Calu3 (cell line): ENCODE measurements at regions of chr1 and their contacts with region 1.

Region 1: DNA sequence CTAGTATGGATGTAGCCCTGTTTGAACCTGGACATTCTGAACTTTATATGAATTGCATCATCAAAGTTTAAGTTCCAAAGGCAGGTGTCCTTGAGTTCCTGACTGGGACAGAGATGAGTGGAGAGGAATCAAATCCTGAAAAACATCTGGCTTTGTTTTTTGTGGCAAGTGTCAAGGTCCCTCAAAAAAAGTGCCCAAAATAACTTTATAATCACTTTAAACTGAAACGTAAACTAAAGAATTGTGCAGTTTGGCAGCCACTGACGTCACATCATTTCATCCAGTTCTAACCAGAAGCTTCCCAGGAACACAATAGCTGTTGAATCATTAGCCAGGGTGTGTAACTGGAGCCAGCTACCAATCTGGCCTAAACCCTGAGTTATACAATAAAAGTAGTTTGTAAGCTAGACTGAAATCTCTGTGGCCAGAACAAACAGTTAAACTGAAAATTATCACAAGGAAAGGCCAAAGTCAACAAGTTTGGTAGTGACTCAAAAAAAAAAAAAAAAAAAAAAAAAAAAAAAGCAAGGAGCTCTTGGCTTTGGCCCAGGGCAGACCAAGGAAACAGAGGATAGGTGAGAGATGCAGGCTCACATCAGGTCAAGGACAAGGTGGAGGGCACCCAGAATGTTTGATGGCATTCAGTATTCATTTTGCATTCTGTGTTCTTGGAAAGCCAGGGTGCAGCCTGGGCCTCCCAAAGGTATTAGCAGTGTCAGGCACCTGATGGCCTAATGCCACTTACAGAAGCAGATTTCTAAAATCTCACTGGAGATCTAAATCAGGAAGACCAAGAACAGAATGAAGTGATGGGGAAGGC is 74.3 kb downstream of the TNFSF18 start:
- DNase-seq: peak; percentile 71
- H3K4me3 Mint-ChIP-seq: no peak overlapping the region
- H3K27ac Mint-ChIP-seq: peak overlapping the region; percentile 72
- H3K4me1 Mint-ChIP-seq: peaks cover 53% of the 10 kb centered on the region
- H3K27me3 Mint-ChIP-seq: no peaks in the 10 kb centered on the region
- CTCF ChIP-seq: no peak

Region 2: DNA sequence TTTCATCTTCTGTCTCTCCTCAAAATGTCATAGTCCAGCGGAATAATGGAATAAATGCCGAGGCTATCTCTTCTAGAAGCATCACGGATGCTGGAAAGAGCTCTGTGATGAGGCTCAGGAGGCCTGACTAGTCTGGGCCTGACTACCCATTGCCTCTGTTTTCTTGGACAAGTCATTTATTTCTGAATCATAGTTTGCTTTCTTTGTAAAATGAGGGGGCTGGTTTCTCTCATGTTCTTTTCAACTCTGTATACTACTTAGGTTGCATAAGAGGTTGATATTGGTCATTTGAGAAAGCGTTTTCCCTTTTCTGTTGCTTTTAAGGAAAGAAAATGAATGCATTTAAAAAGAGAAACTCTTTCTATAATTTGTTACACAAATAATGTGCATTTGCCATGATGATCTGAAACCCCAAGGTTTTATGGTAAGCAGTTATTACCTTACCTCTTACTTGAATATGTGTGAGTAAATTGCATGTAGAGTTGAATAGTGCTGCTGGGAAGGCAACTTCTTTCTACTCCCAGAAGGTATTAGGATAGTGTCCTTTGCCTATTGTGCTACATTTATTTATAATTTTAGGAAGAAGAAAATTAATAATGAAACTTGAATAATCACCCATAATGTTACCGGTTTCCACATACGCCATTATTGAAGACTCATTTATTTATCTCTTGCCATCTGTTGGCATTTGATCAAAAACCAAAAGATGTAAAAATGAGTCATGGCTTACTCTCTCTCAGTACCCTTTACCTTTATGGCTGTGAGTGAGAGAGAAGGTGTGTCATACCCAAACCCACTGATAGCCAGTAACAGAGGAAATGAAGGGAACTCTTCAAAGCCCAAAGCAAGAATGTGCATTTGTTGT is 138.4 kb before region 1 on chr1:
- CTCF ChIA-PET with region 1: no interaction called
- intact Hi-C with region 1: no loop called
- DNase-seq: no peak
- H3K4me3 Mint-ChIP-seq: no peak overlapping the region
- H3K27ac Mint-ChIP-seq: no peak overlapping the region
- H3K4me1 Mint-ChIP-seq: no peaks in the 10 kb centered on the region
- H3K27me3 Mint-ChIP-seq: no peaks in the 10 kb centered on the region
- CTCF ChIP-seq: no peak

Region 3: GRCh38 chr1:172906778-172907592 is 69.4 kb before region 1 on chr1:
- CTCF ChIA-PET with region 1: no interaction called
- intact Hi-C with region 1: loop called (anchors 5 kb)
- DNase-seq: peak; percentile 45
- H3K4me3 Mint-ChIP-seq: peak overlapping the region; percentile 24
- H3K27ac Mint-ChIP-seq: peak overlapping the region; percentile 93
- H3K4me1 Mint-ChIP-seq: peaks cover 65% of the 10 kb centered on the region
- H3K27me3 Mint-ChIP-seq: no peaks in the 10 kb centered on the region
- CTCF ChIP-seq: no peak

Region 4: DNA sequence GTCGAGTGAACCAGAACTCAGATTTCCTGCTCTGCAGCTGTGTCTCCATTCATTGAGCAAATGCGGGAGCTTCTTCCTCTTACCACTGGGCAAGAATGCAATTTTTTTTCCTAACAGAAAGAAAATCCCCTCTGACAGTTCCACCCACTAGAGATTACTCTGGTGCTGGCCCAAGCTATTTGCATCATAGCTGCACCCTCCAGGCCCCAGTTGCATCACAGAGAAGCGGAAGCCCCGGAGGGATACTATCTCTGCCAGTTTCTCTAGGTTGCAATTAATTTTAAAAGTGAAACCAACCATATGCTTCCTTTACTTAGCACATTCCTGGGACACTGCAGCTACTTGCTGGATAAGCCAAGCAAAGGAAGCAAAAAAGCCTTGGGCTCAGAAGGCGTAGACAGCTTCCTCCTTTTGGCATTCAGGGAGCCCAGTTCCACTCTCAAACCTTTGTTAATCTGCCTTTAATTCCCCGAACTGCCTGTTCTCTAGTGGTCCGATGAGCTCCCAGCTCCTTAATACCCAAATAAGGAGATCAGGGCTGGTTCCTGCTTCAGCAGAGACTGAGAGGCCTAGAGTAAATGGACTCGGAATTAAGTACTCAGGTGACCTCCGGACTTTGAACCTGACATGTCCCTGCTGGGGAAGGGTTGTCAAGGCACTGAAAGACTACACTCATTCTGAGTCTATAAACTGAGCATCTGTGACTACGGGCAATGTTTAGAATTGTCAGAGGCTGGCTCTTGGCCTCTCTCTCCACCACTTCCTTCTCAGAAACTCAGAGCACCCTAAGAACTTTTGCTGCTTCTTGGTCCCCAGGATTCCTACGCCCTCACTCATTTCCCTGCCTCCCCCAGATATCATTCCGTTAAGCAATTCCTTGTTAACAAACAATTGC is 146.8 kb after region 1 on chr1:
- CTCF ChIA-PET with region 1: interaction called, 3 read pairs
- intact Hi-C with region 1: loop called (anchors 2 kb)
- DNase-seq: peak; percentile 55
- H3K4me3 Mint-ChIP-seq: peak overlapping the region; percentile 65
- H3K27ac Mint-ChIP-seq: peak overlapping the region; percentile 88
- H3K4me1 Mint-ChIP-seq: peaks cover 50% of the 10 kb centered on the region
- H3K27me3 Mint-ChIP-seq: no peaks in the 10 kb centered on the region
- CTCF ChIP-seq: no peak

Region 5: GRCh38 chr1:173202430-173203145 is 226.2 kb after region 1 on chr1:
- CTCF ChIA-PET with region 1: interaction called, 10 read pairs
- intact Hi-C with region 1: loop called (anchors 2 kb)
- DNase-seq: peak; percentile 61
- H3K4me3 Mint-ChIP-seq: no peak overlapping the region
- H3K27ac Mint-ChIP-seq: no peak overlapping the region
- H3K4me1 Mint-ChIP-seq: peaks cover 19% of the 10 kb centered on the region
- H3K27me3 Mint-ChIP-seq: no peaks in the 10 kb centered on the region
- CTCF ChIP-seq: peak; percentile 72

Region 6: DNA sequence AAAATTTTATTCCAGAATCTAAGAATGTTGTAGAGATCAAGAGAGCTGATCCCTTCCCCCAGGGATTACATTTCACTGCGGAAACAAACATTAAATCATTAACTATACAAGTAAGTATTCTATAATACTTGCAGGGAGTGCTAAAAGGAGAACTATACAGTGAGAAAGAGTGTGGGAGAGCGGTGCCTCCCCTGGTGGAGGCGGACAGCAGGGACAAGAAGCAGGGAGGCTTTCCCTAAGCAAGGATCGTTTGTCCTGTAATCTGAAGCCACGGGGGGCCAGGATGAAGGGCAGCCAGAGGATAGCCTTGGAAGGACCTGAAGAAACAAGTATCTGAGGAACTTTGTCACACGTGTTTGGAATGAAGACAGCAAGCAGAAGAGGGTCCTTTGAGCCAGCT is 586.4 kb after region 1 on chr1:
- CTCF ChIA-PET with region 1: no interaction called
- intact Hi-C with region 1: no loop called
- DNase-seq: peak; percentile 29
- H3K4me3 Mint-ChIP-seq: no peak overlapping the region
- H3K27ac Mint-ChIP-seq: no peak overlapping the region
- H3K4me1 Mint-ChIP-seq: no peaks in the 10 kb centered on the region
- H3K27me3 Mint-ChIP-seq: no peaks in the 10 kb centered on the region
- CTCF ChIP-seq: no peak